Common myeloid progenitor, CD34-positive (primary cell): ENCODE measurements at regions of chr11 and their contacts with region 1.

Region 1: GRCh38 chr11:62542750-62543567 is 3.6 kb downstream of the AHNAK start:
- DNase-seq: peak; percentile 68 to 78 (median 78)
- H3K4me3 ChIP-seq: peak overlapping the region in 5 of 7 experiments; percentile 21 to 97 (median 66)
- H3K27ac ChIP-seq: peak overlapping the region in 1 of 2 experiments; percentile 63
- H3K4me1 ChIP-seq: peaks cover 8 to 82% (median 80%) of the 10 kb centered on the region in 4 experiments
- H3K27me3 ChIP-seq: peaks cover 0 to 2% (median 0%) of the 10 kb centered on the region in 5 experiments

Region 2: DNA sequence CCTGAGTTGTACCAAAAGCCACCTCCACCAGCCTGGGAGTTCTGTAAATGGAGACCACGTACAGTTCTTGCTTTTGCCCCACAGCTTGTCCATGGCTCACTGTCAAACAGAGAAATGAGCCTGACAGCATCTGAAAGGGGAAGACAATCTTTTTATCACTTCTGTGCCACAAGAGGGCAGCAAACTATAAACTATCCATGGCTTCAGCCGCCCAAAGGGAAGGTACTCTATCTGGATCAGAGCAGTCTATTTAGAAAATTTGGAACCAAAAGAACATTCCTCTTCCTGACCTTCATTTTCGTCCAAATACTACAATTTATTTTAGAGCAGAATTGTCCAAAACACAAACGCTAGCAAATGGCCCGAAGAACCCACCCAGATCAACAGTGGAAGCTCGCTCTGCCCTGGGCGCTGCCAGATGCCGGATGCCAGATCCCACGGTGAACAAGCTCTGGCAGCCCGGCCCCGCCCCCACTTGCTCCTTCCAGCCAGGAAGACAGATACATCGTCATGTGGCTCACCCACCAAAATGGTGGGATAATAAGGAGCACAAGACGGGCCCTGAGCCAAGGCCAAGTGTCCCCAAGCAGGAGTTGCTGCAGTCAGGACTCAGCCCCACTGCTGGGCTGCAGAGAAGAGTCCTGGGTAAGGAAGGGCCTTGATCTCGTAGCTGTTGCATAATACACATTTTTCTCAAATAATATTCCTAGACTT is 148.0 kb before region 1 on chr11:
- CTCF ChIA-PET with region 1: interaction called, 35 read pairs
- POLR2A ChIA-PET with region 1: no interaction called
- DNase-seq: peak; percentile 84 to 89 (median 86)
- H3K4me3 ChIP-seq: no peak overlapping the region
- H3K27ac ChIP-seq: no peak overlapping the region
- H3K4me1 ChIP-seq: peaks cover 0 to 79% (median 27%) of the 10 kb centered on the region in 4 experiments
- H3K27me3 ChIP-seq: no peaks in the 10 kb centered on the region

Region 3: DNA sequence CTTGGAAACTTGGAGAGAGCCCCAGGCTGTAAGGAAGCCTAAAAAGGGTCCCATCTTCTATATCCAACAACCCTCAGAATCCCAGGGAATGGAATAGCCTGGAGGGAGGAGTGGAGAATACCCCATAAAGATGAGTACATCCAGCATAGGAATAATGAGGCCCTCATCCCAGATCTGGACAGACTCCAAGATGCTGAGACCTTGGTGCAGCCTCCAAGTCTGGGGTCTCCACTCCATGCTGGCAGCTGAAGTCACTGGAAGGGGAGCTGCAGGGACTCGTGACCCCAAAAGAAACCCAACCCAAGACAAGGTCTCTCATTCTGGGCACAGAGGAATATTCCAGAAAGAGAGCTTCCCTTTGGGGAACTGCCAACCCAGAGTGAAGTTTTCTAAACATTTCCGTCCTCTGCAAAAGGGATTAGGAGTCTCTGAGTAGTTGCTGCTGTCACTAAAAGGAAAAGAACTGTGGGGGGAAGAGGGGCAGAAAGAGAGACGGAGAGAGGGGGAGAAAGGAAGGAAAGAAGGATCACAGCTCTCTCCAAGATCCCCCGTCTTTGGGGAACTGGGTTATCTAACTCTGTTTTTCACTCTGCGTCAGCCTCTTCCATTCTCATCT is 123.5 kb before region 1 on chr11:
- CTCF ChIA-PET with region 1: interaction called, 69 read pairs
- POLR2A ChIA-PET with region 1: interaction called, 6 read pairs
- DNase-seq: no peak
- H3K4me3 ChIP-seq: no peak overlapping the region
- H3K27ac ChIP-seq: peak overlapping the region in 1 of 2 experiments; percentile 34
- H3K4me1 ChIP-seq: peaks cover 0 to 3% (median under 1%) of the 10 kb centered on the region in 4 experiments
- H3K27me3 ChIP-seq: no peaks in the 10 kb centered on the region

Region 4: GRCh38 chr11:62427630-62428233 is 115.2 kb before region 1 on chr11:
- CTCF ChIA-PET with region 1: interaction called, 69 read pairs
- POLR2A ChIA-PET with region 1: interaction called, 6 read pairs
- DNase-seq: peak; percentile 43 to 77 (median 57)
- H3K4me3 ChIP-seq: no peak overlapping the region
- H3K27ac ChIP-seq: peak overlapping the region in 1 of 2 experiments; percentile 18
- H3K4me1 ChIP-seq: peaks cover 0 to 43% (median 31%) of the 10 kb centered on the region in 4 experiments
- H3K27me3 ChIP-seq: no peaks in the 10 kb centered on the region

Region 5: DNA sequence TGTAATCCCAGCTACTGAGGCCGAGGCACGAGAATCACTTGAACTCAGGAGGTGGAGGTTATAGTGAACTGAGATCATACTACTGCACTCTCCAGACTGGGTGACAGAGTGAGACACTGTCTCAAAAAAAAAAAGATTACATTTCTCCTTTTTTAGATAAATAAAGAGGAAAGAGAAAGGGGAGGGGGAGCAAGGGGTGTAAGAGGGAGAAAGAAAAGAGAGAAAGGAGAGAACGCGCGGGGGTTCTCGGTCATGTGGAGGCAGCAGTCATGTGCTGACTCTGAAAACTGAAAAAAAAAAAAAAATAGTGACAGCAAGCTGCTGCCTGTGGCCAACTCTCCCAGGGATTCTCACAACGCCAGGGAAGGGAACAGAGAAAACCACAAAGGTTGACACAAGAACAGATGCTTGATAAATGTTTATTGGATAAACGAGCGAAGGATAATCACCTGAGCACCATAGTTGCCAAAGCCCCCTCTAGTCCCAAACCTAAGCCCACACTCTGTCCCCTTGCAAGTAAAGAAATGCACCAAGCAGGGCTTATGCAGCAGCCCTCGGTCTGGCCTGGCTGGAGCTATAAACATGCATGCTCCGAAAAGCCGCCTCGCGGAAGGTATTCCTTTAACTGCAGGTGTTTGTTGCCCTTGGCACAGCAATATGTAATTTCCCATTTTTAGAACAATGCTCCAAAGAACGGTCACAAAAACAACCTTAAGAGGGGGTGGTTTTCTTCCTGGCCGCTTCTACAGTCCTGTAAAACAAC is 109.6 kb before region 1 on chr11:
- CTCF ChIA-PET with region 1: interaction called, 13 read pairs
- POLR2A ChIA-PET with region 1: no interaction called
- DNase-seq: peak in 2 of 3 donors; percentile 17 to 34
- H3K4me3 ChIP-seq: peak overlapping the region in 3 of 7 experiments; percentile 13 to 56 (median 44)
- H3K27ac ChIP-seq: no peak overlapping the region
- H3K4me1 ChIP-seq: peaks cover 14 to 55% (median 44%) of the 10 kb centered on the region in 4 experiments
- H3K27me3 ChIP-seq: no peaks in the 10 kb centered on the region

Region 6: DNA sequence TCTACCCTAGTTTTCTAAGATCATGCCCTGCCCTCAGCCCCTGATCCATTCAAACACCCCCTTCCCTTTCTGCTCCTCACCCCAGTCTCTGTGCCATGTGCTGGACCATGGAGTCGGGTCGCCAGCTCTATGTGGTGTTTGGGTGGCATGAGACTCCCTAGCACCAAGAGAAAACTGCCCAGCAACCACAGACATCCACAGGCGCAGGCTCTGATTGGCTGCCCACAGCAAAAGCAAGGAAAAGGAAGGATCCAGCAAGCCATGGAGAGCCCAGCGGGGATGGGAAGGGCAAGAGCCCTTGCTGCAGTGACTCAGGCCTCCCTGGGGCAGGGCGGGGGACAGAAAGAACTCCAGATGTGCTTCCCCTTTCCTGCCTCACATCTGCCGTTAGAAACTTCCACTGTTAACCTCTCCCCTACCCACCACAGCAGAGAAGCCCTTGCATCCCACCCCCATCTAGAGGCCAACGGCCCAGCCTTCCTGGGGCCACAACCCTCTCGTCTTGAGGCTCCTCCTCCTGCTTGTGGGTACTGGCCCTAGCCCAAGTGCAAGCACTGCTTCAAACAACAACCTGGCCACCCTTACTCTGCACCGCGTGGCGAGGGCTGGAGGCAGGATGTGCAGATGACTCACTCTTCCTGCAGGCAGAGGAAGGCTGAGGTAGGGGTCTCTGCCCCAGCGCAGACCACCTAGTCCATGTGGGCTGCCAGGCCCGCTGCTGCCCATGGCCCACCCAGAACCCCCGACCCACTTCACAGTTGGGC is 13.3 kb after region 1 on chr11:
- CTCF ChIA-PET with region 1: interaction called, 283 read pairs
- POLR2A ChIA-PET with region 1: interaction called, 10 read pairs
- DNase-seq: peak; percentile 93 to 99 (median 98)
- H3K4me3 ChIP-seq: peak overlapping the region in 6 of 7 experiments; percentile 4 to 70 (median 52)
- H3K27ac ChIP-seq: peak overlapping the region; percentile 96 to 97
- H3K4me1 ChIP-seq: peaks cover 23 to 93% (median 89%) of the 10 kb centered on the region in 4 experiments
- H3K27me3 ChIP-seq: no peaks in the 10 kb centered on the region

Region 7: DNA sequence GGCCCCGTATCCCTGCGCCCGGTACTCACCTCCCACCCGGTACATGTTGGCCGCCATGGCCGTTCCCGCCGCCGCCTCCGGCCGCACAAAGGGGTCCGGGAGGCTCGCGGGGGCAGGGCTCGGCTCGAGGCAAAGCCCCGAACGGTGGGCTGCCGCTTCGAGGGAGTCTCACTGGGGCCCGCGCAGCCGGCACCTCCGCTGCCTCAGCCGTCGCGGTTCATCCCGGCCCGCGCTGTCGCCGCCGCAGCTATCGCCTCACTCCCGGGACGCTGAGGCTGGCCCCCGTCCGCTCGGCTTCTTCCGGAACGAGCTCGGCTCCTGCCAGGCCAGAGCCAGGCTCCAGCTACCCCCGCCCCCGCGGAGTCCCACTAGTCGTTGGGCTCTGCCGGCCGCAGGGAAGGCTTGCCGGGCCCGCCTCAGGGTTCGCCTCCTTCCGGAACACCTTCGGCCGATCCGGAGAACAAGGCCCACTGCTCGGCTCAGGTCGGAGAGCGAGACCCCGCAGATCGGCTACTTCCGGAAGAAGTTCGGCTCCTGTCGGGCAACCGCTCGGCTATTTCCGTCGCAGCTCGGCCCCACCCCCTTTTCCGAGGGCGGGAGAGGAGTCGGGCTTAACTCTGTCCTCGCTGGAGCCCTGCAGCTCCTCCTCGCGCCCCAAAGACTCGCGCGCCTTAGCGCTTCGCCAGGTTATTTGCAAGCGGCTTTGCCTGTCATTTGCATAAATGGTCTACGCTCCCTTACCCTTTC is 58.6 kb after region 1 on chr11 and contains the start of gene MTA2:
- CTCF ChIA-PET with region 1: no interaction called
- POLR2A ChIA-PET with region 1: no interaction called
- DNase-seq: peak; percentile 98 to 99 (median 99)
- H3K4me3 ChIP-seq: peak within 1 kb of the TSS; percentile 71 to 97 (median 94)
- H3K27ac ChIP-seq: peak within 1 kb of the TSS; percentile 85 to 94
- H3K4me1 ChIP-seq: peaks cover 18 to 43% (median 32%) of the 10 kb centered on the region in 4 experiments
- H3K27me3 ChIP-seq: no peaks in the 10 kb centered on the region

Region 8: DNA sequence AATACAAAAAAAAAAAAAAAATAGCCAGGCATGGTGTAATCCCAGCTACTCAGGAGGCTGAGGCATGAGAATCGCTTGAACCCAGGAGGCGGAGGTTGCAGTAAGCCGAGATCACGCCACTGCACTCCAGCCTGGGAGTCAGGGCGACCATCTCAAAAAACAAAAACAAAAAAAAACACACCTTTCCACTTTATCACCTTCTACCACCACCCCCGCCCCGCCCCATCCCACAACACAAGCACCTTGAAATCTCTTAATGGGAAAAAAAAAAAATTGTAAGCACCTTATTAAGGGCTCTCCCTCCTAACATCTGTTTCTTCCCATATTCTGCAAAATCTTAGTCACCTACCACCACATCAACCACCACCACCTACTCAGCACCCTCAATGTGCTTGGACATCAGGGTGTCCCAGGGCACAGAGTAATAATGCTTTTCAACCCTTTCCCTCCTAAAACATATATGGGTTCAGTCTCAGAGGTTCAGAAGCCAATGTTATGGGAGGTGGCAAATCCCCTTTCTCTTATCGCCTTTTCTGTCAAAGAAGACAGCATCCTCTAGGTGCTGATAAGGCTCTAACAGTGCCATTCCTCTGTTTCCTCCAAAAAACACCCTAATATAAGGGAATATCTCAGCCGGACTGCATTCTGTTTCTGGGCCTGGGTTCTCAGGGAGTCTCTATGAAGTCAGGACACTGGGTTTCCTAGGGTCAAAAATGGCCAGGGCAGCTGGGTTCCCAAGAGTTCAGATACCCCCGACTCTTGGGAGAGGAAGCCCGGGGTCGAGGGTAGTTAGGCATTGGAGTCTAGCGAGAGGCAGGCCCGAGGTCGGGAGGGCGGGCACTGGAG is 109.4 kb after region 1 on chr11:
- CTCF ChIA-PET with region 1: no interaction called
- POLR2A ChIA-PET with region 1: no interaction called
- DNase-seq: peak in 2 of 3 donors; percentile 7 to 13
- H3K4me3 ChIP-seq: peak overlapping the region; percentile 81 to 97 (median 94)
- H3K27ac ChIP-seq: peak overlapping the region; percentile 89 to 94
- H3K4me1 ChIP-seq: peaks cover 0 to 21% (median 14%) of the 10 kb centered on the region in 4 experiments
- H3K27me3 ChIP-seq: no peaks in the 10 kb centered on the region

Region 9: DNA sequence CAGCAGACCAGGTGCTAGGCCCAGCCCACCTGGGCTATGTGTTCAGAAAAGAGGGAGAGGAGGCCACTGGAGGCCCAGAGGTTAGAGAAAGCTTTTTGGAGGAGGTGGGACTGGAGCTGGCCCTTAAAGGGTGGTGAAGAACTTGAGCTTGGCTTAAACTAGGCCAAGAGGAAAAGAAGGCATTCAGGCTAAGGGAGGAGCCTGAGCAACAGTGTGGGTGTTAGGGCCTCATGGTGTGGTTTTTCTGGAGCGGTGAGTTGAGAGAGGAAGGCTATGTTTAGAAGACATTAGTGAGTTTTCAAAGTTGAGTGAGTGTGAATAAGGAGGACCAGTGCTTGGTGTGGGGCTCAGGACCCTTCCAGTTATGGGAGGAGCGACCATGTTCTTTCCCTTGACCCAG is 234.4 kb after region 1 on chr11:
- CTCF ChIA-PET with region 1: no interaction called
- POLR2A ChIA-PET with region 1: no interaction called
- DNase-seq: no peak
- H3K4me3 ChIP-seq: no peak overlapping the region
- H3K27ac ChIP-seq: no peak overlapping the region
- H3K4me1 ChIP-seq: peaks cover 0 to 7% (median 0%) of the 10 kb centered on the region in 4 experiments
- H3K27me3 ChIP-seq: no peaks in the 10 kb centered on the region